ENCODE measurements at regions of chr6 and their contacts with region 1.

Region 1: DNA sequence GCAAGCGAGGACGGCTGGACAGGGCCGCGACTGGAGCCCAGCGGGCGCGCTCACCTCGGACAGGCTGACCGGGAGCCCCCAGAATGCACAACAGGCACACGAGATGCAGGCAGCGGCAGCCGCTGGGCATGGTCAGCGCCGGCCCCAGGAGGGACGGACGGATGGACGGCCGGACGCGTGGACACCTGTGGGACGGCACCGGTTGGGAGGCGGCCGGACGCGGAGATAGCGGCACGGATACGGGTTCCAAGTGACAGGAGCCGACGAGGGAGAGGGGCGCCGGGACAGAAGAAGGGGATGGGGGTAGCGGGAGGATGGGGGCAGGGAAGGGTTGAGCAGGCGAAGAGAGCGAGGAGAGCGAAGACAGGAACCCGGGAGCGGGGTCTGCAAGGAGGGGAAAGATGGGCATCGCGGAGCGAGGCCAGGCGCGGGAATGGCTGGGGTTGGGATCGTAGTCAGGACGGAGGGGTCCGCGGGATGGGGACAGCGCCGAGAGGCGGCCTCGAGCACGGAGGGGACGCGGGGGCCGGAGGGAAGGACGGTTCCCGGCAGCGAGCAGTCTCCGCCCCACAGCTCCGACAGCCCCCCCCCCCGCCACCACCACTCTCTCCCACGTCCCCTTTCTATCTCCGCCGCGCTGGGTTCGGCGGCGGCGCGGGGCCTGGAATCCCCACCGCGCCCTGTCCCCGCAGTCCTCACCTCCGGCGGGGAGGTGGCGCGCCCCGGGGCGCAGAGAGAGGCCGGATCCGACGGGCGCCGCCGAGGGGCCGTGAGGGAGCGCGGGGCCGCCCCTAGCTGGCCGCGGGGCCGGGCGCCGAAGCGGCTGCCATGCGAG is 435 bp downstream of the DLK2 start:
- DNase-seq: peak; percentile 71 to 88
- ATAC-seq: peak; percentile 76 to 88
- H3K4me3 ChIP-seq: peak overlapping the region; percentile 55
- H3K27ac ChIP-seq: peak overlapping the region; percentile 55 to 92
- H3K4me1 ChIP-seq: peaks cover 12% of the 10 kb centered on the region; the same call in 1 of the 3 replicates
- CTCF ChIP-seq: no peak; the same call in 1 of the 3 replicates
- EP300 ChIP-seq: no peak
- POLR2A ChIP-seq: no peak
- RAD21 ChIP-seq: no peak

Region 2: DNA sequence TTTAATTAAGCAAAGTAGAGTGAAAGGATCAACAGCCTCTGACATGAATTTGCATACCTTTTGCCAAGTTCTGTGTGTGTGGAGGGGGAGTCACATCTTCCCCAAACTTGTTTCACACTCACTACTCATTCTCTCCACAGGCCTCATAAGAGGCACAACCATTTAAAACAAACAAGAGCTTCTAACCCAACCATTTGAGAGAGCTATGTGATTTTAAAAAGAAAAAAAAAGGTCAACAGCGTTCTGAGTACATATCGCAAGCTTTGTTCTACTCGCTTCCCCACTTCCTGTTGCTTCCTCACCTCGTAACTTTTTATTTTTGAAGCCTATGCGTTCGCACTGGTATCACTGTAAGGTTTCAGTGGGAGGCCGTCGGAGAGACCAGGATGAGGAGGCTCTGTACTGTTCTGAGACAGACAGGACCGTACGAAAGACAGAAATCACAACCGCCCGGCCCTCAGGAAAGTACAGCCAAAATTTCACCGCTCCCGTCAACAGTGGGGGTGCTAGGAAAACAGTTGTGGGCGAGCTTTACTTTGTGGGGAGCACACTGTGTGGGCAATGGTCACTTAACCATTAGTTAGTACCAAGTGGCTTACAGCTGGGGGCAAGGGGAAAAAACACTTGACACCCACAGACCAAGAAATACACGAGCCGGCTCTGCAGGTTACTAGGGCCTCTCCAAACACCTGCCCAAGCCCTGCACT is 1064.5 kb before region 1 on chr6:
- CTCF ChIA-PET with region 1: no interaction called
- POLR2A ChIA-PET with region 1: no interaction called
- DNase-seq: no peak
- ATAC-seq: no peak
- H3K4me3 ChIP-seq: no peak overlapping the region
- H3K27ac ChIP-seq: no peak overlapping the region
- H3K4me1 ChIP-seq: 0 out of 3 replicates have a peak, but pooled peaks cover 7% of the 10 kb centered on the region
- CTCF ChIP-seq: no peak
- EP300 ChIP-seq: no peak
- POLR2A ChIP-seq: no peak
- RAD21 ChIP-seq: no peak

Region 3: GRCh38 chr6:43444036-43444435 is 10.9 kb before region 1 on chr6:
- CTCF ChIA-PET with region 1: interaction called, 15 read pairs
- POLR2A ChIA-PET with region 1: no interaction called
- DNase-seq: no peak
- ATAC-seq: peak in 1 of 2 experiments; percentile 17; a peak in 1 of 6 replicates
- H3K4me3 ChIP-seq: no peak overlapping the region
- H3K27ac ChIP-seq: no peak overlapping the region
- H3K4me1 ChIP-seq: no peaks in the 10 kb centered on the region
- CTCF ChIP-seq: no peak
- EP300 ChIP-seq: no peak
- POLR2A ChIP-seq: no peak
- RAD21 ChIP-seq: no peak

Region 4: GRCh38 chr6:43496370-43497128 is 41.6 kb after region 1 on chr6:
- CTCF ChIA-PET with region 1: interaction called, 62 read pairs
- POLR2A ChIA-PET with region 1: interaction called, 3 read pairs
- DNase-seq: peak; percentile 22 to 52
- ATAC-seq: peak; percentile 68 to 77
- H3K4me3 ChIP-seq: no peak overlapping the region
- H3K27ac ChIP-seq: peak overlapping the region; percentile 15 to 75; a peak in 3 of 6 replicates
- H3K4me1 ChIP-seq: peaks cover 16% of the 10 kb centered on the region
- CTCF ChIP-seq: peak; percentile 27; the same call in 2 of the 3 replicates
- EP300 ChIP-seq: no peak
- POLR2A ChIP-seq: no peak
- RAD21 ChIP-seq: peak; percentile 53 to 65

Region 5: DNA sequence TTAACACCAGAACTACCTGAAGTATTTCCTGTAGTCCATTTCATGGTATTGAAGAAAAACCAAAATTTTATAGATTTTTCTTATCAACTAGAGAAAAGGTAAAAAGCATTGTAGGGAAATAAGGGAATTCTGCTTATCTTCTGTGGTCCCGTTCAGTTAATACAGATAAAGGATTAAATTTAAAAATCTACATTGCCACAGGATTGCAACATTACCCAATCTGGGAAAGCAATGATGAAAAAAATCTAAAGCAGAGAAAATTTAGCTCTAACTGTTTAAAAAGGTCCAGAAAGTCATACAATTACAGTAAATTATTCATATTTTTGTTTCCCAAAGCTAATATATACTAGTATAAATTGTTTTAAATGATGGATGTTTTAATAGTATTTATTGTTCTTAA is 139.0 kb after region 1 on chr6:
- CTCF ChIA-PET with region 1: no interaction called
- POLR2A ChIA-PET with region 1: no interaction called
- DNase-seq: no peak
- ATAC-seq: no peak
- H3K4me3 ChIP-seq: no peak overlapping the region
- H3K27ac ChIP-seq: no peak overlapping the region
- H3K4me1 ChIP-seq: no peaks in the 10 kb centered on the region
- CTCF ChIP-seq: no peak
- EP300 ChIP-seq: no peak
- POLR2A ChIP-seq: no peak
- RAD21 ChIP-seq: no peak

Measured in A549 (cell line).